ENCODE measurements at regions of chr2 and their contacts with region 1.

Region 1: GRCh38 chr2:196113061-196113974 is 44.7 kb upstream of the DNAH7 start:
- DNase-seq: peak; percentile 19
- H3K4me3 Mint-ChIP-seq: peak overlapping the region; percentile 56
- H3K27ac Mint-ChIP-seq: peak overlapping the region; percentile 95
- H3K4me1 Mint-ChIP-seq: peaks cover 20% of the 10 kb centered on the region
- H3K27me3 Mint-ChIP-seq: no peaks in the 10 kb centered on the region
- CTCF ChIP-seq: no peak

Region 2: GRCh38 chr2:195343942-195344530 is 769.3 kb before region 1 on chr2:
- CTCF ChIA-PET with region 1: no interaction called
- intact Hi-C with region 1: no loop called
- DNase-seq: no peak
- H3K4me3 Mint-ChIP-seq: no peak overlapping the region
- H3K27ac Mint-ChIP-seq: no peak overlapping the region
- H3K4me1 Mint-ChIP-seq: peaks cover 8% of the 10 kb centered on the region
- H3K27me3 Mint-ChIP-seq: no peaks in the 10 kb centered on the region
- CTCF ChIP-seq: no peak

Region 3: GRCh38 chr2:196160101-196160500 is 46.8 kb after region 1 on chr2:
- CTCF ChIA-PET with region 1: interaction called, 3 read pairs
- intact Hi-C with region 1: loop called (anchors 2 kb)
- DNase-seq: peak; percentile 61
- H3K4me3 Mint-ChIP-seq: no peak overlapping the region
- H3K27ac Mint-ChIP-seq: peak overlapping the region; percentile 44
- H3K4me1 Mint-ChIP-seq: peaks cover 11% of the 10 kb centered on the region
- H3K27me3 Mint-ChIP-seq: no peaks in the 10 kb centered on the region
- CTCF ChIP-seq: no peak

Region 4: DNA sequence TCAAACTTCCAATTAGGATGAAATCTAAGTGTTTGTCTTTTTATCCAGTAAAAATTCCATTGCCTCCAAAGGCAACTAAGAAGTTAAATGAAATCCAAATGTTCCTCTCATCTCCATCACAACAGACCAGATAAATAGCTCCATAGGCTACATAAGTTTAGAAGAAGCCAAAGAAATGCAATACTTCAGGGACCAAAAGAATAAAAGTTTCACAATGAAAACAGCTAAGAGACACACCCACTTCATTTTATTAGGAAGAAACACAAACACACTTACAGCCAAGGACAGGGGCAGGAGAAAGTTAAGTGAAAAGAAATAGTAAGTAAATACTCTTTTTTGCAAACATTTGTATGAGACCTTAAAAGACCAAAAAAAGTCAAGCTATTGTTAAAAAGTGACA is 437.7 kb after region 1 on chr2:
- CTCF ChIA-PET with region 1: no interaction called
- intact Hi-C with region 1: no loop called
- DNase-seq: no peak
- H3K4me3 Mint-ChIP-seq: no peak overlapping the region
- H3K27ac Mint-ChIP-seq: no peak overlapping the region
- H3K4me1 Mint-ChIP-seq: no peaks in the 10 kb centered on the region
- H3K27me3 Mint-ChIP-seq: no peaks in the 10 kb centered on the region
- CTCF ChIP-seq: no peak